A673 (cell line): ENCODE measurements at regions of chr11 and their contacts with region 1.

Region 1: DNA sequence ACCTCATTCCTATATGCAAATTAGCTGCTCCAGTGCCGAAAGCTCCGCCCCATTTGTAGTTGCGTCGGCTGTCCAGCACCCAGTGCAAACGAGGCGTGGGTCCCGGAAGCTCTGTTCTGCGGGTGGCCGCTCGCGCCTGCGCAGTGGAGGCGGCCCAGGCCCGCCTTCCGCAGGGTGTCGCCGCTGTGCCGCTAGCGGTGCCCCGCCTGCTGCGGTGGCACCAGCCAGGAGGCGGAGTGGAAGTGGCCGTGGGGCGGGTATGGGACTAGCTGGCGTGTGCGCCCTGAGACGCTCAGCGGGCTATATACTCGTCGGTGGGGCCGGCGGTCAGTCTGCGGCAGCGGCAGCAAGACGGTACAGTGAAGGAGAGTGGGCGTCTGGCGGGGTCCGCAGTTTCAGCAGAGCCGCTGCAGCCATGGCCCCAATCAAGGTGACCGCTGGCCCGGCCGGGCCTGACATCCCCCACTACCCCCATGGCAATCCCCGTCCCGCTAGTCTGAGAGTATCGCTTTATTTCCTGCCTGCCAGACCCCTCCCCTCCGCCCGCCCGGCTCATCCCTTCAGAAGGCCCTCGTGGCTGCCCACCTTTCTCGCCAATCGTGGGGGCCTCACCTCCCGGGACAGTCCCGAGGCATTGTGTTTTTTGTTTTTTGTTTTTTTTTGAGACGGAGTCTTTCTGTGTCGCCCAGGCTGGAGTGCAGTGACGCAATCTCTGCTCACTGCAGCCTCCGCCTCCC is at the start of gene PRDX5:
- DNase-seq: peak; percentile 99
- H3K4me3 ChIP-seq: peak within 1 kb of the TSS; percentile 85
- H3K27ac ChIP-seq: peak within 1 kb of the TSS; percentile 94
- H3K4me1 ChIP-seq: peaks cover 15% of the 10 kb centered on the region
- H3K27me3 ChIP-seq: no peaks in the 10 kb centered on the region
- CTCF ChIP-seq: peak; percentile 56
- total RNA-seq, gene PRDX5: 206 and 221 TPM in 2 replicates

Region 2: GRCh38 chr11:64246871-64247728 is 71.0 kb before region 1 on chr11 and contains the start of gene PPP1R14B:
- CTCF ChIA-PET with region 1: interaction called, 11 read pairs
- POLR2A ChIA-PET with region 1: no interaction called
- intact Hi-C with region 1: no loop called
- DNase-seq: peak; percentile 95
- H3K4me3 ChIP-seq: peak within 1 kb of the TSS; percentile 99
- H3K27ac ChIP-seq: peak within 1 kb of the TSS; percentile 92
- H3K4me1 ChIP-seq: peaks cover 32% of the 10 kb centered on the region
- H3K27me3 ChIP-seq: no peaks in the 10 kb centered on the region
- CTCF ChIP-seq: no peak
- total RNA-seq, gene PPP1R14B: 378 and 402 TPM in 2 replicates

Region 3: GRCh38 chr11:64331557-64332371 is 13.6 kb after region 1 on chr11:
- CTCF ChIA-PET with region 1: interaction called, 15 read pairs
- POLR2A ChIA-PET with region 1: interaction called, 3 read pairs
- intact Hi-C with region 1: no loop called
- DNase-seq: peak; percentile 89
- H3K4me3 ChIP-seq: no peak overlapping the region
- H3K27ac ChIP-seq: no peak overlapping the region
- H3K4me1 ChIP-seq: peaks cover 5% of the 10 kb centered on the region
- H3K27me3 ChIP-seq: no peaks in the 10 kb centered on the region
- CTCF ChIP-seq: peak; percentile 83

Region 4: GRCh38 chr11:64341851-64342791 is 24.0 kb after region 1 on chr11:
- CTCF ChIA-PET with region 1: interaction called, 10 read pairs
- POLR2A ChIA-PET with region 1: no interaction called
- intact Hi-C with region 1: no loop called
- DNase-seq: peak; percentile 93
- H3K4me3 ChIP-seq: peak overlapping the region; percentile 38
- H3K27ac ChIP-seq: peak overlapping the region; percentile 70
- H3K4me1 ChIP-seq: no peaks in the 10 kb centered on the region
- H3K27me3 ChIP-seq: no peaks in the 10 kb centered on the region
- CTCF ChIP-seq: peak; percentile 57